Activated naive CD4-positive, alpha-beta T cell treated with anti-CD3 and anti-CD28 coated beads for 36 hours (primary cell): ENCODE measurements at regions of chr9 and their contacts with region 1.

Region 1: DNA sequence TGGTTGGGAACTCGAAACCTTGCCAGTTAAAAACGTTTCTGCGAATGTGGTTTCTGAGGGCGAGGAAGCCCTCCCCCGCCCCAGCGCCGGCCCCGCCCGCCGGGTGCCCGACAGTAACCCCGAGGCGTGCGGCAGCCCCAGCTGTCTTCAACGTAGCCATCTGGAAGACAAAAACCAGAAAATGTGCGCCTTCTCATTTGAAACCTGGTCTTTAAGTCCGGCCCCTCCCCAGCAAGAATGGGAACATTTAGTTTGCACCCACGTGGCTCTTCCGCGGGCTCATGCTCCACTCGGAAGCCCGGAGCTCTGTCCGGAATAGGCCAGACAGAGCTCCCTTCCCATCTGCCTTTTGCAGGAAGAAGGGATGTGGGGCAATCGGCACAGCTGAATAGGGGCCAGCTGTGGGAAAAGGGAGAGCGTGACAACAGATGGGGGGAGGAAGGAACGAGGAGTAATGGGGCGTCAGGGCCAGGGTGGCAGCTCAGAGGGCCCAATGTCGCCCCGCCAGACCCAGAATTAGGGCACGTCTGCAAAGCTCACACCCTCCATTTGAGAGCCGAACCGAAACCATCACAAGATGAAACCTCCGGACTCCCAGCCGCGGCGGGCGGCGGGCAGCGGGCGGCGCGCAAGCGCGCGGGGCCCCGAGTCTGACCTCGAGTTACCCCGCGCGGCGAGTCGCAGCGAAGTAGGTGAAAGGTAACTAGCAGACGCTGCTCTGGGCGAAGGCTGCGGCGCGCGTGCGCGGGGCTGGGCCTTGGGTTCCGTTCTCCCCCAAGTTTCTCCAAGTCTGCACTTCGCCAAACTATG is 63.4 kb upstream of the ABCA1 start:
- DNase-seq: peak; percentile 90
- H3K4me3 Mint-ChIP-seq: peak overlapping the region; percentile 82
- H3K27ac Mint-ChIP-seq: peak overlapping the region; percentile 97
- H3K4me1 Mint-ChIP-seq: peaks cover 54% of the 10 kb centered on the region
- H3K27me3 Mint-ChIP-seq: peaks cover 14% of the 10 kb centered on the region

Region 2: DNA sequence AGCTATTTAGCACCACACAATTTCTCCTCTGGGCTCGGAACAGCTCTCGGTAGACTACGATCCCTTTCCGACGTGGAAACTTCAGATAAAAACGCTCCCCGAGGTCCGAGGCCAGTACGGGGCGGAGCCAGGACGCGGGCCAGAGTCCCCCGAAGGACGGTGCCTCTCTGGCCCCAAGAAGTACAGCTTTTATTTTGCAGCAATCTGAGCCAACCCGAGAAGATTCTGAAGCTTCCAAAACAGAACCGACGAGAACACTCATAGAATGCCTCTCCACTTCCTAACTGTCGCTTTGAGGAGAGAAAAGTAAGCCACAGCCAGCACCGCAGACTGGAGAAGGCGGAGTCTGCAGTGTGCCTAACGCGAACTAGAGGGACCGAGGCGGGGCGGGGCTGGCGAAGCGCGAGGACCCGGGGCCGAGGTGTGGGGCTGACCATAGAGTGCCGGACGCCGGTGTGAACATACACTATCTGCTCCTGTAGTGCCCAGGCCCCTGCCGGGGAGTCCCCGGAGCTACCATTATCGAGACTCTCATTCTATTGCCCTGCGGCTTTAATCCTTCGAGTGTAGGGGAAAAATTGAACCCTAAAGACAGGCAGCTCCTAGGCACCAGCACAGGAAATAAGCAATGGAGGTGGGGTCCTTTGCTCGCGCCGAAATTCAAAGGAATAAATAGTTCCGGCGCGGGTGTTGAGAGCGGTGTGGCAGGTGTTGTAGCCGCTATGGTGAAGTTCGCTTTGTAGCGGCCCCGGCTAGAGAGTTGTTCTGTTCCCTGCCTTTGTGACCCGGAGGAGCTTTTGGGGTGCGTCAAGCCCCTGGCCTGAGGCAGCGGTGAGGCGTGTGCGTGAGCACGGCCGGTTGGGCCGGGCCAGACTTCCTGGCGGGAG is 897.5 kb before region 1 on chr9 and contains the start of gene SMC2:
- CTCF ChIA-PET with region 1: no interaction called
- intact Hi-C with region 1: loop called (anchors 10 kb)
- DNase-seq: peak; percentile 93
- H3K4me3 Mint-ChIP-seq: peak within 1 kb of the TSS; percentile 99
- H3K27ac Mint-ChIP-seq: peak within 1 kb of the TSS; percentile 95
- H3K4me1 Mint-ChIP-seq: peaks cover 35% of the 10 kb centered on the region
- H3K27me3 Mint-ChIP-seq: no peaks in the 10 kb centered on the region
- total RNA-seq, gene SMC2: 62.0 to 63.8 TPM

Region 3: DNA sequence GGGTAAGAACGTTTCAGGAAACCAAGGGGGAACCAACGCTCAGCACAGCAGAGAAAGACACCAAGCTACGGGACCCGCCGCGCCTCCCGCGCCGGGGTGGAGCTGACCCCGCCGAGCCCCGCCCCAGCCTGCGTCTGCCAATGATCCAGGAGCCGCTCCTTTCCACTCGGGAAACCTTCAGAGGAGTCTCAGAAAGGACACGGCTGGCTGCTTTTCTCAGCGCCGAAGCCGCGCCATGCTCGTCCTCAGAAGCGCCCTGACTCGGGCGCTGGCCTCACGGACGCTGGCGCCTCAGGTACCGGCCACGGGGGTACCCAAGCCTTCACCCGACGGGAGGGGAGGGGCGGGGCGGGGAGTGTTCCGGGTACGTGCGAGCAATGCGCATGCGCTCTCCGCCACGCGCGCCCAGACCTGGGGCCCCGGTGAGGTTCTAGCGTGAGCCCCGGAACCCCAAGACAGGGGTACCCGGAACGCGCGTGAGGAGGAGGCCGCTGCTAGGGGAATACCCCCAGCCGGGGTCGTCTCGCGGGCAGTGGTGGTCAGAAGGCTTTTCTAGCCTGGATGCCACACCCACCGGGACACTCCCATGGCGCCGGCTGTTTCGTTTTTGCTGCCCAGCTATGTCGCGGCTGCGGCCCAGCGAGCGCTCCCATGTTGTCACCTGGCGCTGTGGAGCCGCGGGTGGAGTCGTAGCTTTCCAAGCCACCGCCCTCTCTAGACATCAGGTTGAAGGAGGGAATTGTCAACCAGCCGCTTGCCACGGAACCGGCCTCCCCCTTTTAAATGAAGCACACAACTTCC is 243.6 kb before region 1 on chr9 and contains the start of gene NIPSNAP3A:
- CTCF ChIA-PET with region 1: no interaction called
- intact Hi-C with region 1: no loop called
- DNase-seq: peak; percentile 89
- H3K4me3 Mint-ChIP-seq: peak within 1 kb of the TSS; percentile 99
- H3K27ac Mint-ChIP-seq: peak within 1 kb of the TSS; percentile 97
- H3K4me1 Mint-ChIP-seq: peaks cover 24% of the 10 kb centered on the region
- H3K27me3 Mint-ChIP-seq: no peaks in the 10 kb centered on the region
- total RNA-seq, gene NIPSNAP3A: 17.8 TPM

Region 4: DNA sequence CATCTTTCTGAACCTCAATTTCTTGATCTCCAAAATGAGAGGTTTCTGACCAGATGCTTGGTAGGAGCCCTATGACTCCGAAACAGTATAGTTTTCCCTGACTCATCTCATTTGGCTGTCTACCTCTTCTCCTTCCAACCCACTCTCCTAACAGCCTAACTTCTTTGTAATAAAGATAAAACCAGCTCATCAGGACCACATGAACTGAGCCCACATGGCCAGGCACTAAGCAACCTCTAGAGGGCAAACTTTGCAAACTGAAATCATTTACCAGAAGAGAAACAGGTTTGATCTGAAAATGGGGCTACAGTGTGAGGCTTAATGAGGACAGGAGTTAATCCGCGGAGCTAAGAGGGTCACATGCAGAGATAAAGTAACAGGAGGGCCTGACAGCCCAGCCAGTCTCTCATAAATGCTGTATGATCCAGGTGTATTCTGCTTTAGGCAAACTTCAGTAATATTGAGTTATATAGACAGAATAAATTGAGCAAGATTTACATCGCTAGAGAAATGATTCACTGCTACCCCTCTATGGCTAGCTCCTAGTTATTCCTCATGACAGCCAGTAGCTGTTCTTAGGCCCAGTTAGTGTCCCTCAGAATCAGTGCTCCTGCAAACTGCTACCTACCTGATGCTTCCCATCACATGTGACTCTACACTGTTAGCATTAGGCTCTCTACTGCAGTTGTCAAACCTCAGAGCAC is 128.0 kb before region 1 on chr9:
- CTCF ChIA-PET with region 1: no interaction called
- intact Hi-C with region 1: loop called (anchors 5 kb)
- DNase-seq: peak; percentile 58
- H3K4me3 Mint-ChIP-seq: no peak overlapping the region
- H3K27ac Mint-ChIP-seq: no peak overlapping the region
- H3K4me1 Mint-ChIP-seq: peaks cover 17% of the 10 kb centered on the region
- H3K27me3 Mint-ChIP-seq: no peaks in the 10 kb centered on the region

Region 5: GRCh38 chr9:104968025-104968982 is 23.0 kb before region 1 on chr9:
- CTCF ChIA-PET with region 1: interaction called, 3 read pairs
- intact Hi-C with region 1: loop called (anchors 1 kb)
- DNase-seq: peak; percentile 92
- H3K4me3 Mint-ChIP-seq: peak overlapping the region; percentile 95
- H3K27ac Mint-ChIP-seq: peak overlapping the region; percentile 97
- H3K4me1 Mint-ChIP-seq: peaks cover 12% of the 10 kb centered on the region
- H3K27me3 Mint-ChIP-seq: no peaks in the 10 kb centered on the region

Region 6: DNA sequence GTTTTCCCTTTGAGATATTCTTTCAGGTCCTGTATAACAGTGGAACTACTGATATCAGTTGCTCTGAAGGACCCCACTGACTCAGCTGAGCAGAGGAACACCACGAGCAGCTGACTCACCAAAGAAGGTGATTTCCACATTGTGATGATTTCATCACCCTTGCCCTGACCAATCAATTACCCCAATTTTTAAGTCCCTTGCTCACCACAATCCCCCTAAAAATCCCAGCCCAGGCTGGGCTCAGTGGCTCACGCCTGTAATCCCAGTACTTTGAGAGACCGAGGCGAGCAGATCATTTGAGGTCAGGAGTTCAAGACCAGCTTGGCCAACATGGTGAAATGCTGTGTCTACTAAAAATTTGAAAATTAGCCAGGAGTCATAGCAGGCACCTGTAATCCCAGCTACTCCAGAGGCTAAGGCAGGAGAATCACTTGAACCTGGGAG is 61.9 kb after region 1 on chr9:
- CTCF ChIA-PET with region 1: no interaction called
- intact Hi-C with region 1: loop called (anchors 1 kb)
- DNase-seq: peak; percentile 89
- H3K4me3 Mint-ChIP-seq: no peak overlapping the region
- H3K27ac Mint-ChIP-seq: peak overlapping the region; percentile 88
- H3K4me1 Mint-ChIP-seq: peaks cover 42% of the 10 kb centered on the region
- H3K27me3 Mint-ChIP-seq: no peaks in the 10 kb centered on the region

Region 7: GRCh38 chr9:105127863-105128220 is 136.5 kb after region 1 on chr9:
- CTCF ChIA-PET with region 1: no interaction called
- intact Hi-C with region 1: loop called (anchors 1 kb)
- DNase-seq: peak; percentile 74
- H3K4me3 Mint-ChIP-seq: no peak overlapping the region
- H3K27ac Mint-ChIP-seq: peak overlapping the region; percentile 28
- H3K4me1 Mint-ChIP-seq: peaks cover 44% of the 10 kb centered on the region
- H3K27me3 Mint-ChIP-seq: no peaks in the 10 kb centered on the region

Region 8: GRCh38 chr9:105557771-105558610 is 566.6 kb after region 1 on chr9 and contains the start of gene FKTN:
- CTCF ChIA-PET with region 1: no interaction called
- intact Hi-C with region 1: loop called (anchors 5 kb)
- DNase-seq: peak; percentile 88
- H3K4me3 Mint-ChIP-seq: peak within 1 kb of the TSS; percentile 85
- H3K27ac Mint-ChIP-seq: peak within 1 kb of the TSS; percentile 77
- H3K4me1 Mint-ChIP-seq: peaks cover 16% of the 10 kb centered on the region
- H3K27me3 Mint-ChIP-seq: no peaks in the 10 kb centered on the region
- total RNA-seq, gene FKTN: 8.0 to 9.6 TPM